ENCODE measurements at regions of chr4 and their contacts with region 1.

Region 1: DNA sequence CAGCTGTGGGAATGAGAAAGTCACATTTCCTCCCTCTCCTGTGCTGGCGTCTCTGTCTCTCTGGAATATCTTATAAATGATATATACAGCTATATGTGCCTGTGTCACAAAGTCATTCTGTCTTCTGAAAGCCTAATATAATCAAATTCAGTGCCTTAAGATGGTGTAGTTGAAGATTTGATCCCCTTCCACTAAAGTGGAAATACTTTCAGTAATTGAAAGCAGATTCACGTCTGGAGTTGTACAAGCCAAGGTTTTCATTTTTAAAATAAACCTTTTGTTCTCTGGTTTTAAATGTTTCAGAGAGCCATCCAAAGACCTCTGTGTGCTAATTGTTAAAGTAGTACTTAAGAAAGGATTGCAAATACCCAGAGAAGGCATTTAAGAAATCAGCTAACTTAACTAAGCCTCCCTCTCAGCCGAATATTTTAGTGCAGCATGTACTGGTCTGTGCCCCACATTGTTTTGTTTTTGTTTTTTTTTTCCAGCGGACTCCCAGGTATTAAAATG is 206.8 kb downstream of the TENM3 start:
- DNase-seq: no peak
- ATAC-seq: no peak

Region 2: GRCh38 chr4:181234951-181235680 is 1214.9 kb before region 1 on chr4:
- intact Hi-C with region 1: loop called (anchors 5 kb)
- DNase-seq: no peak
- ATAC-seq: no peak

Region 3: GRCh38 chr4:182143822-182144625 is 306.0 kb before region 1 on chr4:
- intact Hi-C with region 1: no loop called
- DNase-seq: peak; percentile 66
- ATAC-seq: peak; percentile 72

Region 4: DNA sequence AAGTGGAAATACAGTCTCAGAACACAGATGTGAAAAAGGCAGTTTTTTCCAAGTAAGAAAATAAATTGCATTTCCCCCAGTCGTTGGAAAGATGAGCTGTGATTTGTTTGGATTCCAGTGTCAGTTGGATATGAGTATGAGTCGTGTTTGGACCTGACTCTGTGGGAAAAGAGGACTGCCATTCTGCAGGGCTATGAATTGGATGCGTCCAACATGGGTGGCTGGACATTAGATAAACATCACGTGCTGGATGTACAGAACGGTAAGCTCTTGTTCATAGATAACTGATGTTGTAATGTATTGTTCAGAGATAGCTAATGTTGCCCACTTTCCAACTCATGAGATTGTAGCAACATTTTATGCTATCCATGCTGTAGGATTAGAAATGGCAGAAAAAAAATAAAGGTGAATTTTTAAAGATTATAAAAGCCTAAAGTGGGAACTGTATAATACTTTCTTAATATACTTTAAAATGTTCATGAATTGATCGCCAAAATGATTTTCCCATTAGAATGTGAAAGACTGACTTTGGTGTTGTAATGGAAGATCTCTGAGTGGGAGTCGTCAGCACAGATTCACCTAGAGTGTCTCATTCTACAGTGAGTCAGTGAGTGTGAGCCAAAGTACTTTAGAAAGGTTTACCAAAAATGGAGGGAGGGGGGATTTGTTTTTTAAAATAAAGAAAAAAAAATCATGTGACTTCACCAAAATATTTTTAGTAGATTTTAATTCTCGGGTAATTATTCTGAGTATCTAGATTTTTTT is 288.5 kb after region 1 on chr4:
- intact Hi-C with region 1: no loop called
- DNase-seq: no peak
- ATAC-seq: no peak

Measured in sciatic nerve (tissue), 2 donors.